CD8-positive, alpha-beta T cell (primary cell): ENCODE measurements at regions of chr19 and their contacts with region 1.

Region 1: DNA sequence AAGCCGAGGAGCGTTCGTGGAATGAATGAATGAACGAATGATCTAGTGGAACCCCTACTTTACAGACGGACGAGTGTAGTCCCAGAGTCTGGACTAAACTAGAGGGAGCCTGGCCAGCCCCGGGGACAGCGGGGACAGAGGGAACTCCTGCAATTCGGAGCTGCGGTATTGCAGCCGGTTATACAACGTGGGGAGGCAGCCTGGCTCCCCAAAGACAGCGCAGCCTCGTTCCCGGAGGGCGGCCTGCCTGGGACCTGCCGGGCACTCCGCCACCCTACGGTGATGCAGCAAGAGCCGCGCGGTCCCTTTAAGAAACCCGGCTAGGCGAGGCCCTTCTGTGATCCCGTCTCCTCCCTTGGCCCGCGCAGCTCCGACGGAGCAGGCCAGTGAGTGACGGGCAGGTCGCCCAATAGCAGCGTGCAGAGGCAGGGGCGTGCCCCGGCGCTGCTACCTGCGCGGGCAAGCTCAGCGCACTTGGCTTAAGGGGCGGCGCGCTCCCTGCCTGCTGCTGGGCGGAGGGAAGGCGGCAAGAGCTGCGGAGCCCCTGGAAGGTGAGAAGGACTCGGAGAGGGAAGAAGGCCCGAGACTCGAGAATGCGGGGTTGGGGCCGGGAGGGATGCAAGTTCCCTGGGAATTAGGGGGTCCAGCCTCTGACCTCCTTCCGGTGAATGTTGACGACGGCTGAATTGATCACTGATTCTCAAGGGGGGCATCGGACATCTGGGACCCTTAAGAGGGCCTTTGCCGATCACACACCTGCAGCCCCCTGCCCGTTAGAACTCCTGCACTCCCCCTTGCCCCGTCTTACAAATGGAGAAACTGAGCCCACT is at the start of gene ABCA7:
- DNase-seq: peak; percentile 98 to 100 (median 99)
- ATAC-seq: peak; percentile 90
- H3K4me3 ChIP-seq: peak within 1 kb of the TSS; percentile 71 to 96
- H3K4me3 Mint-ChIP-seq: peak within 1 kb of the TSS; percentile 99
- H3K27ac ChIP-seq: peak within 1 kb of the TSS; percentile 65 to 71
- H3K27ac Mint-ChIP-seq: peak within 1 kb of the TSS; percentile 96
- H3K4me1 ChIP-seq: peaks cover 43% of the 10 kb centered on the region
- H3K4me1 Mint-ChIP-seq: peaks cover 50% of the 10 kb centered on the region
- H3K27me3 ChIP-seq: no peaks in the 10 kb centered on the region
- H3K27me3 Mint-ChIP-seq: no peaks in the 10 kb centered on the region
- CTCF ChIP-seq: no peak
- total RNA-seq, gene ABCA7: 93.3 to 98.0 TPM

Region 2: DNA sequence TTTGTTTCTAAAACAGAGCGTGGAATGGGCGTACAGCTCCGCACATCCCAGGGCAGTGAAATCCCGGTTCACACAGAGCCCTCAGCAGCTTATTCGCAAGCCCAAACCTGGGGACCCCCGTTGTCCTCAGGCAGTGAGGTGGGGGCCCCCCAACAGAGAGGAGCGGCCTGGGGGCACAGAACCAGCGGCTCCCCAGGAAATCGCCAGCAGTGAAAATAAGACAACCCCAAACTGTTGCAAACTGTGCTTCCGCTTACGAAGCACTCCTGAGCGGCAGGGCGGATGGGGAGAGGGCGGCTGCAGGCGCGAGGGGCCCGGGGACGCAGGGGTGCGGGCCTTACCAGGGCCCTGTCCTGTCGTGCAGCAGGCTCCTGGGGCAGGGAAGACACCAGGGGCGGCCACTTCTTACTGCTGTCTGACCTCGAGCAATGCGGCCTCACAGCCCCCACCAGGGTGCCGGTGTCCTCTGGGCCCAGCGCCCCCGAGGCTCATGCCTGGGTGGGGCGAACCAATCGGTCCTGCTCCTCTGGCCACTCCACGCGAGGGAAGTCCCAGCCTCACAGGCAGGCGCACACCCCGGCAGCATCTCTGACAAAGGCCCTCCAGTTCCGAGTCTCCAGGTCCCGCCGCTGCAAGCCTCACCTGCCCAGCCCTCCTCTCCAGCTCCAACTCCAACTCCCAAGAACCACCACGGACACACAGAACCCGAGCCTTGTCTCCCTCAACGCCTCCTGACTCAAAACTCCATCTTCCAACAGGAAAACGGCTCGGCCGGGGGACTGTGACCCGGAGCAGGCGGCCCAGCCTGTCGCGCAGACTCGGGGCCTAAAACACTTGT is 394.0 kb before region 1 on chr19:
- CTCF ChIA-PET with region 1: no interaction called
- POLR2A ChIA-PET with region 1: no interaction called
- intact Hi-C with region 1: no loop called
- DNase-seq: no peak
- ATAC-seq: no peak
- H3K4me3 ChIP-seq: no peak overlapping the region
- H3K4me3 Mint-ChIP-seq: no peak overlapping the region
- H3K27ac ChIP-seq: no peak overlapping the region
- H3K27ac Mint-ChIP-seq: peak overlapping the region; percentile 77
- H3K4me1 ChIP-seq: no peaks in the 10 kb centered on the region
- H3K4me1 Mint-ChIP-seq: no peaks in the 10 kb centered on the region
- H3K27me3 ChIP-seq: no peaks in the 10 kb centered on the region
- H3K27me3 Mint-ChIP-seq: no peaks in the 10 kb centered on the region
- CTCF ChIP-seq: no peak

Region 3: GRCh38 chr19:1026189-1027019 is 13.5 kb before region 1 on chr19 and contains the start of gene CNN2:
- CTCF ChIA-PET with region 1: interaction called, 68 read pairs
- POLR2A ChIA-PET with region 1: interaction called, 148 read pairs
- intact Hi-C with region 1: loop called (anchors 1 kb)
- DNase-seq: peak in 8 of 9 experiments; percentile 48 to 83 (median 68)
- ATAC-seq: peak; percentile 12
- H3K4me3 ChIP-seq: peak within 1 kb of the TSS; percentile 98 to 100
- H3K4me3 Mint-ChIP-seq: peak within 1 kb of the TSS; percentile 96
- H3K27ac ChIP-seq: peak within 1 kb of the TSS; percentile 74 to 82
- H3K27ac Mint-ChIP-seq: peak within 1 kb of the TSS; percentile 95
- H3K4me1 ChIP-seq: peaks cover 27% of the 10 kb centered on the region
- H3K4me1 Mint-ChIP-seq: peaks cover 31% of the 10 kb centered on the region
- H3K27me3 ChIP-seq: no peaks in the 10 kb centered on the region
- H3K27me3 Mint-ChIP-seq: no peaks in the 10 kb centered on the region
- CTCF ChIP-seq: no peak
- total RNA-seq, gene CNN2: 382 to 392 TPM

Region 4: GRCh38 chr19:1113033-1113985 is 73.4 kb after region 1 on chr19:
- CTCF ChIA-PET with region 1: no interaction called
- POLR2A ChIA-PET with region 1: no interaction called
- intact Hi-C with region 1: no loop called
- DNase-seq: peak; percentile 67 to 92 (median 89)
- ATAC-seq: peak; percentile 97
- H3K4me3 ChIP-seq: no peak overlapping the region
- H3K4me3 Mint-ChIP-seq: no peak overlapping the region
- H3K27ac ChIP-seq: peak overlapping the region in 1 of 2 experiments; percentile 56
- H3K27ac Mint-ChIP-seq: no peak overlapping the region
- H3K4me1 ChIP-seq: peaks cover 14% of the 10 kb centered on the region
- H3K4me1 Mint-ChIP-seq: peaks cover 4% of the 10 kb centered on the region
- H3K27me3 ChIP-seq: no peaks in the 10 kb centered on the region
- H3K27me3 Mint-ChIP-seq: no peaks in the 10 kb centered on the region
- CTCF ChIP-seq: peak; percentile 85